ENCODE measurements at regions of chr2 and their contacts with region 1.

Region 1: DNA sequence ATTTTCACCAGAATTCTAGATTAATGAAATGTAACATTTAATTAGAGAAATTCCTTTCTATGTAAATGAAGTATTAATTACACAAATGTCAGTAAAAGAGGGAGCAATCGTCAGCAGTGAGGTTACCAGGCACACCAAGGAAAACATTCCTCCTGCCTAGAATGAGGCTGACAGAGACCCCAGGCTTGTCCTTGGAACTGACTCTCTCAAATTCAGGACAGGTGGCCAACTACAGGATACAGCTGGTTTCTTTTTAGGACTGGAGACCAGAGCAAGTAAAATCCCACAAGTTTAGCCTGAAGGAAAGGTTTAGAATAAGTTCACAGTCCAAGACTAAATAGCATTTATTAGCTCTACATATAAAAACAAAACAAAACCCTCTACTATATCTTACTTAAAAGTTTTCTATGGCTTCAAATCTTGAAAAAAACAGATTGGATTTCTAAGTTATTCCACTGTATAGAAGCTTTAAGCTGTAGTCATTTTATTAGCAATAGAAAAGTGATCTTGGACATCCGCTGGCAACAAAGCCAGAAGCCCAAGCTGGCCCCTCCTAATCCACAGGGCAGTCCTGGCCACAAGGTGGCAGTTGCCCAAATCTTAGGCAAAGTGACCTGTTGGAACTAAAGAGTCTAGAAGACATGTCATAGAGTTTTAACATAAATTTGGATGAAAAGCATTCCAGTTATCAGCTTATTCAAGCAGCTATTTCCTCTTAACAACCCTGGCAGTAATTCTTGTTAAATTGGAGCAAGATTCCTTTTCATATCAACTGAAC is 81.0 kb downstream of the SP3 start:
- DNase-seq: peak; percentile 11
- H3K4me3 ChIP-seq: no peak overlapping the region
- CTCF ChIP-seq: peak; percentile 51

Region 2: GRCh38 chr2:173934895-173935294 is 50.7 kb after region 1 on chr2:
- in situ Hi-C with region 1: loop called (anchors 5 kb)
- DNase-seq: no peak
- H3K4me3 ChIP-seq: no peak overlapping the region
- CTCF ChIP-seq: no peak